ENCODE measurements at regions of chr9 and their contacts with region 1.

Region 1: GRCh38 chr9:20356403-20357035 is 265.8 kb downstream of the MLLT3 start:
- DNase-seq: peak; percentile 86
- ATAC-seq: peak; percentile 70
- H3K4me3 ChIP-seq: no peak overlapping the region
- H3K27ac ChIP-seq: peak overlapping the region; percentile 9; the same call in 1 of the 2 replicates
- H3K4me1 ChIP-seq: peaks cover 21% of the 10 kb centered on the region
- H3K27me3 ChIP-seq: no peaks in the 10 kb centered on the region
- CTCF ChIP-seq: peak; percentile 83
- POLR2A ChIP-seq: no peak
- RAD21 ChIP-seq: peak; percentile 89

Region 2: DNA sequence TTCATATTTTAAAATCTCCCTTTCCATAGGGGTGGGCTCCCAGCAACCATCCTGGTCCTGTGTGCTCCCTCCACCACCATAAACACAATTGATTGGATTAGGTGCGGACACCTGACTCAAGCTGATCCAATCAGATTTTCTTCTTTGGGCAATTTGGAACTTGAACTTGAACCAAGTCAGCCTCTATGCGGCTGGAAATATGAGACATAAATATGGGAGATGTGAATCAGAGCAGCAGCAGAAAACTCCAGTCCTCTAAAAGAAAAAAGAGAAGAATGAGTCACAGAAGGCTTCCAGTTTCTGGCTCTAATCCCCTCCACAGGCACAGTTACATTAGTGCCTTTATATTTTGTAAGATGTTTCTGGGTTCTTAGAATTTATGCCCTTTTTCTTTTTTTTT is 40.8 kb before region 1 on chr9:
- CTCF ChIA-PET with region 1: no interaction called
- POLR2A ChIA-PET with region 1: no interaction called
- dilution Hi-C with region 1: no loop called
- in situ Hi-C with region 1: no loop called
- intact Hi-C with region 1: loop called (anchors 2 kb)
- DNase-seq: peak; percentile 91
- ATAC-seq: peak; percentile 86
- H3K4me3 ChIP-seq: no peak overlapping the region
- H3K27ac ChIP-seq: no peak overlapping the region
- H3K4me1 ChIP-seq: peaks cover 9% of the 10 kb centered on the region
- H3K27me3 ChIP-seq: no peaks in the 10 kb centered on the region
- CTCF ChIP-seq: no peak
- POLR2A ChIP-seq: no peak
- RAD21 ChIP-seq: 0 out of 2 replicates have a peak, but pooled peaks have one; percentile 2

Region 3: DNA sequence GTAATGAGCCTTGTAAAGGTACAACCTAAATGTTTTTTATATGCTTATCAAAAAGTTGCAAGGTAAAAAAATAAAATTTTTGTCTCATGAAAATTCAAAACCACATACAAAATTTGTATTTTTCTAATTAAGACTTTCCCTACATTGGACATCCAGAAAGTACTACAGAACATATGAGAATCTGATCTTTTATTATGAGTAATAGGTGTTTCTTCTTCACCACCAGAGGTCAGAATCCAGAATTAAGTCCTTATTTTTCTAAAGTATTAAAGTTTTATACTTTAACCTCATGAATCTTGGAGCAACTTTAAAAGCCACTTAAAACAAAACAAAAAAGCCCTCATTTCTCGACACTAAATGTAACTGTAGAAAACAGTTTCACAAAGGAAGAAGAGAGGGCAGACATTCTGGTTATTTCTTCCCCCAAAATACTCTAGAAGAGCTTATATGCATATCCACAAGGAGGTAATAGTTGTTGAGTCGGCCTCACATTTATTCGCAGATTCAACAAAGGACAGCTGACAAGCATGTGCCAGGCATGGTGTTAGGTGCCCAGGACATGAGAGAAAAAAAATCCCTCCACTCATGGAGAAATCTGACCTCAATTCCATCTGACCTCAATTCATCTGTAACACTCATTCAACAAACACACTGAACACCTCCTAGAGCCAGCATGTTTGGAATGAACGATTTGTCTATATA is 196.5 kb after region 1 on chr9:
- CTCF ChIA-PET with region 1: no interaction called
- POLR2A ChIA-PET with region 1: no interaction called
- dilution Hi-C with region 1: no loop called
- in situ Hi-C with region 1: no loop called
- intact Hi-C with region 1: loop called (anchors 2 kb)
- DNase-seq: peak; percentile 25
- ATAC-seq: peak; percentile 46
- H3K4me3 ChIP-seq: no peak overlapping the region
- H3K27ac ChIP-seq: no peak overlapping the region
- H3K4me1 ChIP-seq: peaks cover 7% of the 10 kb centered on the region
- H3K27me3 ChIP-seq: no peaks in the 10 kb centered on the region
- CTCF ChIP-seq: peak; percentile 36
- POLR2A ChIP-seq: no peak
- RAD21 ChIP-seq: no peak

Region 4: DNA sequence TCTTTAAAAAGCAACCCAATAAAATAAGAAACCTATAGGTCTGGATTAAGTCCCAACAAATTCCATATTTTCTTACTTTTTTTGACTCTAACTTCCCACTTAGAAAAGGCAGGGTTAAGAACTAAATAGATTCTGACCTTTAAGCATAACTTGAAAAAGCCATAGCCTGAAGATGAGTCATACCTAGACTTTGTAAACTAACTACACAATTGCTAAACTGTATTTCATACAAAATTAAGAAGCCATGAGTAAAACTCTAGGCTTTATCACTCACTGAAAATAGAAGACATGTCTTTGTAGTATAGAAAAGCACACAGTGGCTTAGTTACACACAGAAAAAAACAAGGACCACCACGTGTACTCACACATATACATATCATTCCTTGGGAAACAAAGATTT is 214.2 kb after region 1 on chr9:
- CTCF ChIA-PET with region 1: no interaction called
- POLR2A ChIA-PET with region 1: no interaction called
- dilution Hi-C with region 1: no loop called
- in situ Hi-C with region 1: no loop called
- intact Hi-C with region 1: no loop called
- DNase-seq: peak; percentile 87
- ATAC-seq: peak; percentile 94
- H3K4me3 ChIP-seq: no peak overlapping the region; the same call in 1 of the 2 replicates
- H3K27ac ChIP-seq: peak overlapping the region; percentile 58; the same call in 1 of the 2 replicates
- H3K4me1 ChIP-seq: peaks cover 6% of the 10 kb centered on the region
- H3K27me3 ChIP-seq: no peaks in the 10 kb centered on the region
- CTCF ChIP-seq: no peak
- POLR2A ChIP-seq: no peak
- RAD21 ChIP-seq: no peak

Region 5: GRCh38 chr9:20684035-20684872 is 327.7 kb after region 1 on chr9 and contains the start of gene FOCAD:
- CTCF ChIA-PET with region 1: no interaction called
- POLR2A ChIA-PET with region 1: no interaction called
- dilution Hi-C with region 1: no loop called
- in situ Hi-C with region 1: no loop called
- intact Hi-C with region 1: loop called (anchors 5 kb)
- DNase-seq: peak; percentile 92
- ATAC-seq: peak; percentile 99
- H3K4me3 ChIP-seq: peak within 1 kb of the TSS; percentile 60
- H3K27ac ChIP-seq: peak within 1 kb of the TSS; percentile 61
- H3K4me1 ChIP-seq: 0 out of 2 replicates have a peak, but pooled peaks cover under 1% of the 10 kb centered on the region
- H3K27me3 ChIP-seq: no peaks in the 10 kb centered on the region
- CTCF ChIP-seq: no peak
- POLR2A ChIP-seq: peak; percentile 95
- RAD21 ChIP-seq: no peak
- total RNA-seq, gene FOCAD: 73.9 and 91.2 TPM in 2 replicates

Region 6: GRCh38 chr9:20872340-20872977 is 515.9 kb after region 1 on chr9:
- CTCF ChIA-PET with region 1: no interaction called
- POLR2A ChIA-PET with region 1: no interaction called
- dilution Hi-C with region 1: no loop called
- in situ Hi-C with region 1: no loop called
- intact Hi-C with region 1: loop called (anchors 5 kb)
- DNase-seq: peak; percentile 93
- ATAC-seq: peak; percentile 94
- H3K4me3 ChIP-seq: no peak overlapping the region
- H3K27ac ChIP-seq: peak overlapping the region; percentile 54; the same call in 1 of the 2 replicates
- H3K4me1 ChIP-seq: peaks cover 2% of the 10 kb centered on the region; the same call in 1 of the 2 replicates
- H3K27me3 ChIP-seq: no peaks in the 10 kb centered on the region
- CTCF ChIP-seq: no peak
- POLR2A ChIP-seq: no peak
- RAD21 ChIP-seq: 0 out of 2 replicates have a peak, but pooled peaks have one; percentile 7

Region 7: DNA sequence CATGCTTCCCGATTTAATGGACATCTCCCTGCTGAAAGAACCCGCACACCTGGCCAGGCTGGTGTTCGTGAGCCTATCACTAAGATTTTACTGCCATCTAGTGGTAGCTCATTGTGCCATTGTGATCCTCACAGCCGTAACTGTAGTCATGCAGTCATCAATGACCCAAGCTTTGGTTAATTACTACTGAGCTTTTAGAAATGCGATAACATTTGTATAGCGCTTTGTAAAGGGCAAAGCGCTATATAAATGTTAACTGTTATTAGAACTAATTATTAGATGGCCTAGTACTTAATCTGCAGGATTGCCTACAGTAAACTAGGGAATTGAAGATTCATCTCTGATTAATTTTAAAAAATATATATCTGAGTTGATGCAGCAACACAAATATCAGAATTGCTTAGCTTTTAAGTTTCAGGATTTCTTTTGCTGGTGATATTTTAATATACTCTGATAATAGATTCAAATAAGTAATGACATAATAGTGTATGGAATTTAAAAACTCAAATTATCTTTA is 584.7 kb after region 1 on chr9:
- CTCF ChIA-PET with region 1: interaction called, 5 read pairs
- POLR2A ChIA-PET with region 1: no interaction called
- dilution Hi-C with region 1: loop called (anchors 25 kb)
- in situ Hi-C with region 1: loop called (anchors 10 kb)
- intact Hi-C with region 1: loop called (anchors 1 kb)
- DNase-seq: peak; percentile 71
- ATAC-seq: peak; percentile 95
- H3K4me3 ChIP-seq: no peak overlapping the region
- H3K27ac ChIP-seq: no peak overlapping the region
- H3K4me1 ChIP-seq: no peaks in the 10 kb centered on the region
- H3K27me3 ChIP-seq: no peaks in the 10 kb centered on the region
- CTCF ChIP-seq: peak; percentile 88
- POLR2A ChIP-seq: no peak
- RAD21 ChIP-seq: peak; percentile 91

Region 8: GRCh38 chr9:21110708-21111576 is 754.4 kb after region 1 on chr9:
- CTCF ChIA-PET with region 1: interaction called, 3 read pairs
- POLR2A ChIA-PET with region 1: no interaction called
- dilution Hi-C with region 1: no loop called
- in situ Hi-C with region 1: loop called (anchors 10 kb)
- intact Hi-C with region 1: loop called (anchors 1 kb)
- DNase-seq: peak; percentile 82
- ATAC-seq: peak; percentile 93
- H3K4me3 ChIP-seq: no peak overlapping the region
- H3K27ac ChIP-seq: no peak overlapping the region
- H3K4me1 ChIP-seq: no peaks in the 10 kb centered on the region
- H3K27me3 ChIP-seq: no peaks in the 10 kb centered on the region
- CTCF ChIP-seq: peak; percentile 90
- POLR2A ChIP-seq: no peak
- RAD21 ChIP-seq: peak; percentile 97

Measured in IMR-90 (cell line).